CD8-positive, alpha-beta T cell (primary cell): ENCODE measurements at regions of chr4 and their contacts with region 1.

Region 1: DNA sequence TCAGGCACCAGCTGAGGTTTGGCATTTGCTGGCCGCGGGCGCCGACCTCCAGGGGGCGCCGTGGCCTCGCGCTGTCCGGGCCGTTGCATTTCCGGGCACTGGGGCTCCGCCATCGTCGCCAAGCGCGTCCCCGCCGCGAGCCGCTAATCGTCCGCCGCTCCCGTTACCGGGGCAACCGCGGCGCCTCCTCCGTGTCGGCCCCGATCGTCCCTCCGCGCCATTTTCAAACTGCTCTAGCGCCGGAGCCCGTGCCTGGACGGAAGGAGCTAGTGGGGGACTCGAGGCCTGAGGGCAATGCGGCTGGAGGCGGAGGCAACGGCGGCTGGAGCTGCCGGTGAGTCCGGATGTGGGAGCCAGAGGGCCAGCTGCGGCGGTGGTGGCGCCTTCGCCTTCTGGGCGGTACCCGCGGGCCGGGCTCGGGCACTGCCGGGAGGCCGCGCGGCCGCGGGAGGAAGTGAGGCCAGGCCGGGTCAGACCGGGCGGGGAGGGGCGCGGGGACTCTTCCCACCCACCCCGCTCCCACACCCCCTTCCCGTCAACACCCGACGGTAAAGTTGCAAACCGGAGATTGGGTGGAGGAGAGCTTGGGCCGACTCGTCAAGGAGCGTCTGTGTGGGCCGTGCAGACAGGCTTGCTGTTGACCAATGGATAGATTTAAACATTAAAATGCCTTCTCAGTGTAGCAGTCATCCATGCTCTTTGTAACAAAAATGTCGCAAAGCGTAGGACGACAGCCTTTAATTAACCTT is at the start of gene CEP135:
- DNase-seq: peak; percentile 85 to 96 (median 92)
- ATAC-seq: peak; percentile 70
- H3K4me3 ChIP-seq: peak within 1 kb of the TSS; percentile 66 to 86
- H3K4me3 Mint-ChIP-seq: peak within 1 kb of the TSS; percentile 88
- H3K27ac ChIP-seq: peak within 1 kb of the TSS; percentile 72 to 88
- H3K27ac Mint-ChIP-seq: peak within 1 kb of the TSS; percentile 92
- H3K4me1 ChIP-seq: peaks cover 21% of the 10 kb centered on the region
- H3K4me1 Mint-ChIP-seq: peaks cover 46% of the 10 kb centered on the region
- H3K27me3 ChIP-seq: no peaks in the 10 kb centered on the region
- H3K27me3 Mint-ChIP-seq: no peaks in the 10 kb centered on the region
- CTCF ChIP-seq: peak; percentile 78
- total RNA-seq, gene CEP135: 16.6 to 17.1 TPM

Region 2: DNA sequence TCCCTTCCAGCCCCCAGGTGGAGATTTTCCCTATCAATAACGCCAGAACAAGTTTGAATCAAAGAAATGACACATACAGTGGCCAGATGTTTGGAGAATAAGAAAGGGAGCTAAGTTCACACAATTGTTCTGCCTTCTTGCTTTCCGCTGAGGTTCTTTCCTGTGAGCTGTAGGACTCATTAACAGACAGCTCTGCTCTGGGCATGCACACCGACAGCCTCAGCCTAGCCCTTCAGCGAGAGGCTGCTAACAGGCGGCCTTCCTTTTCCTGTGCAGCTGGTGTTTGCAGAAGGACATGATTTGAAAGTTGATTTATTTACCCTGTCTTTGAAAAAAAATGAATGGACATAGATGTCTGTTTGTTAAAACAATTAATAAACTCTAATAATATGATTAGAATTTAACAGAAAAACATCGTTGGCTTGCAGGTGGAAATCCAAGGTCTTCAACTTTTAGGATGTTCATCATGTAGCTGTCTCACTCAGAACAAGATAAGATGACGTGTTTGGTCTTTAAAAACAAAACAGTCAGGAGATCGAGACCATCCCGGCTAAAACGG is 1006.8 kb before region 1 on chr4:
- CTCF ChIA-PET with region 1: no interaction called
- POLR2A ChIA-PET with region 1: no interaction called
- intact Hi-C with region 1: loop called in 1 of 2 experiments (anchors 10 kb)
- DNase-seq: peak; percentile 18 to 78 (median 34)
- ATAC-seq: peak; percentile 79
- H3K4me3 ChIP-seq: peak overlapping the region in 1 of 2 experiments; percentile 12
- H3K4me3 Mint-ChIP-seq: peak overlapping the region; percentile 71
- H3K27ac ChIP-seq: peak overlapping the region; percentile 59 to 72
- H3K27ac Mint-ChIP-seq: peak overlapping the region; percentile 98
- H3K4me1 ChIP-seq: peaks cover 40% of the 10 kb centered on the region
- H3K4me1 Mint-ChIP-seq: peaks cover 56% of the 10 kb centered on the region
- H3K27me3 ChIP-seq: no peaks in the 10 kb centered on the region
- H3K27me3 Mint-ChIP-seq: no peaks in the 10 kb centered on the region
- CTCF ChIP-seq: no peak

Region 3: DNA sequence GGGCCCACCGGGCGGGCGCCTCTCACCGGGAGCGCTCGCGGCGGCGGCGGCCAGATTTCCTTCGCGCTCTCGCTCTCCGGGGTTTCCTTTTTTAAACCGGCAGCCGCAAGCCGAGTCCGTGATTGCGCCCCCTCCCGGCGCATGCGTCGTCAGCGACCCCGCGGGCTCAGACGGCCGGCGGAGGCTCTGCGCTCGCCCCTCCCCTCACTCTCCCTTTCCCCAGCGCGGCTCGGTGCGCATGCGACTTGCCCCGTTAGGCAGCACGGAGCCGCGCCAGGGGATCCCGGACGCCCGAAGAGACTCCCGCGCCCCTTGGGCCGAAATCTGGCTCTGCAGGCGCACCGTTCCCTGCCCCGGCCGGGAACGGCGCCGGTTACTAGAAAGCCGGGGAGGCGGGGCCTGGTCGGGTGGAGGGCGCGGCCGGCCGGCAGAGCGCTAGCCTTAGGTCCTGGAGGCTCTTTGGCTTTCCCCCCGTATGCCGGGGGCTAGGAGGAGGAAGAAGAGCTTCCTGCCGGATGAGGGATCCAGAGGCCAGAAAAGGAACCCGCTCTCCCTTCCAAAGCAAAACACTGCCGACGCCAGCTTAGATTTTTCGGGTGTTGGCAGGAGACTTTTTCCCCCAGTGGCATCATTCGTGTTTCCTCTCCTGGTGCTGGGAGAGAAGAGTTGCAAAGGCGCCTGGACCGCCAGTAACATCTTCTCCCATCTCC is 402.0 kb before region 1 on chr4 and contains the start of gene CLOCK:
- CTCF ChIA-PET with region 1: no interaction called
- POLR2A ChIA-PET with region 1: interaction called, 3 read pairs
- intact Hi-C with region 1: loop called (anchors 1 to 5 kb)
- DNase-seq: peak; percentile 60 to 91 (median 82)
- ATAC-seq: peak; percentile 72
- H3K4me3 ChIP-seq: peak within 1 kb of the TSS; percentile 90 to 91
- H3K4me3 Mint-ChIP-seq: peak within 1 kb of the TSS; percentile 93
- H3K27ac ChIP-seq: peak within 1 kb of the TSS; percentile 71 to 82
- H3K27ac Mint-ChIP-seq: peak within 1 kb of the TSS; percentile 93
- H3K4me1 ChIP-seq: peaks cover 9% of the 10 kb centered on the region
- H3K4me1 Mint-ChIP-seq: peaks cover 40% of the 10 kb centered on the region
- H3K27me3 ChIP-seq: no peaks in the 10 kb centered on the region
- H3K27me3 Mint-ChIP-seq: peaks cover 5% of the 10 kb centered on the region
- CTCF ChIP-seq: peak; percentile 41
- total RNA-seq, gene CLOCK: 3.7 to 4.3 TPM

Region 4: DNA sequence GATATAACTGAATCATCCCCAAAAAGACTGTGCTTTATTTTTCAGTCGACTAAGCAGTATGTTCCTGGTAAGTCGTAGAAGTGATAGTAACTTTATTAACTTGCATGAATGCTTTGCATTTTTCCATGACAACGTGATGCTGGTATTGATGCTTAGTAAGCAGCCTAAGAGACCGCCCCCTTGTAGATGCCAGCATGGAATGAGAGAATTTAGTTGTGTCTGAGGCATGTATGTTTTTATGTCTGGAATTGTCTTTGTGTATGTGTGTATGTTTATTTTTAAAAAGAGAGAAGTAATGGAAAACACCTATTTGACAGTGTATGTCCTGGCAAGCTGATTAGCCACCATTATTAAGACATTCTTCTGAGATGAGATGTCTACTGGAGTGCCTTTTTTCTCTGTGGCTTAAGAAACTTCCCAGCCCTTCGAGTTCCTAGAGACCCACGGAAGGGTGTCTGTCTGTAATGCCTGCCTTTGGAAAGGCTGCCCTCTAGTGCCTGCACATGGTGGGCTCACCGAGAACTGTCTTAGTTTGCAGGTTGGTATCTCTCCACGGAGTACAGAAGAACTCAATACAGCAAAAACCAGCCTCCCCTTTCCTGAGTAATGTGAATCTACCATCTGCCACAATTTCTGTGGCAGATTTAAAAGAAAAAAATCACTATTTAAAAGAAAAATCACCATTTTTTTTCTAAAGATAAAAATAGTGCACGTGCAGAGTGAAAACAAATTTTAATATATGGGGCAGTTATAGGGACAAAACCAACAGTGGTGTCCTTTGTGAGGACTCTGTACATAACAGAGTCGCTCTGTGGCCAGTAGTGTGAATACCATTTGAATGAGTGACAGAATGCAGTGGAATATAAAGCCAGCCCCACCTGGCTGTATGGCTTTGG is 352.5 kb after region 1 on chr4:
- CTCF ChIA-PET with region 1: interaction called, 8 read pairs
- POLR2A ChIA-PET with region 1: no interaction called
- intact Hi-C with region 1: loop called in 1 of 2 experiments (anchors 2 kb)
- DNase-seq: peak; percentile 5 to 68 (median 51)
- ATAC-seq: peak; percentile 89
- H3K4me3 ChIP-seq: no peak overlapping the region
- H3K4me3 Mint-ChIP-seq: no peak overlapping the region
- H3K27ac ChIP-seq: no peak overlapping the region
- H3K27ac Mint-ChIP-seq: no peak overlapping the region
- H3K4me1 ChIP-seq: peaks cover 4% of the 10 kb centered on the region
- H3K4me1 Mint-ChIP-seq: peaks cover 9% of the 10 kb centered on the region
- H3K27me3 ChIP-seq: no peaks in the 10 kb centered on the region
- H3K27me3 Mint-ChIP-seq: no peaks in the 10 kb centered on the region
- CTCF ChIP-seq: peak; percentile 86

Region 5: DNA sequence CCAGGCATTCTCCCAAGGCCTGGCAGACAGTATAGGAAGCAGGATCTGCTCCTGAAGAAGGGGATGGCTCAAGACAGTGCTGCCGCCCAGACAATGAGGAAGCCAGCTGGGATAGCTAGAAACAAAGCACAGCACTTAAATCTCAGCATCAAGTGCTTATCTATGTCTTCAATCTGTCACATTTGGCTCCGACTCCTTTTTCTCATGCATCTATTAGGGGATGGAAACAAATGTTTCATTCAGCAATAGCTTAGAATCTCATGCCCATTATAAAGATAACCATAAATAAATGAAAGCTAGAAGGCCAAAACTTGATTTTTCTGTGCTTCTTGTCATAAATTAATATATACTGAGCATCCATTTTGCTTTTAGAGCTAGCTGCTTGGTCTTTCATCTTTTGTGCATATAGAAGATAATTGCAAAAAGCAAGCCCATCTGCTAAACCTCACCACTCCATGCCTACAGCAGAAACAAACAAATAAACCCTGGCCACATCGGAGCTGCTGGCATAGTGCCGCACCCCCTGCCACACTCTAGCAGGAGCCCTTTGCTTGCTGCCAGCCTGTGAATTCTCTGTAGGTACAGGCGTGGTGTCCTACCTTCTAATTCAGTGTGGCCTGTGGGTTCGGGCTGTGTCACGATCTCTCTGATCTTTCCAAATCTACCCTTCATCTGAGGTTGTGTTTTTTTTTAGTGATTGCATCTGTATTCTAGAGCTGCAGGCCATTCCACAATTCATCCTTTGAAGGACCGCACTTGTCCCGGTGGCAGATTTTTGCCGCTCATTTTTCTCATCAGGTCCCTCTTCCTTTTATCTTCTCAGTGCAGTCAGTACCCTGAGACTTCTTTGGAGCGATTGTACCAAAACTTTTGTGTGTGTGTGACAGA is 362.6 kb after region 1 on chr4:
- CTCF ChIA-PET with region 1: no interaction called
- POLR2A ChIA-PET with region 1: no interaction called
- intact Hi-C with region 1: no loop called
- DNase-seq: no peak
- ATAC-seq: no peak
- H3K4me3 ChIP-seq: no peak overlapping the region
- H3K4me3 Mint-ChIP-seq: no peak overlapping the region
- H3K27ac ChIP-seq: no peak overlapping the region
- H3K27ac Mint-ChIP-seq: no peak overlapping the region
- H3K4me1 ChIP-seq: no peaks in the 10 kb centered on the region
- H3K4me1 Mint-ChIP-seq: no peaks in the 10 kb centered on the region
- H3K27me3 ChIP-seq: no peaks in the 10 kb centered on the region
- H3K27me3 Mint-ChIP-seq: no peaks in the 10 kb centered on the region
- CTCF ChIP-seq: no peak

Region 6: DNA sequence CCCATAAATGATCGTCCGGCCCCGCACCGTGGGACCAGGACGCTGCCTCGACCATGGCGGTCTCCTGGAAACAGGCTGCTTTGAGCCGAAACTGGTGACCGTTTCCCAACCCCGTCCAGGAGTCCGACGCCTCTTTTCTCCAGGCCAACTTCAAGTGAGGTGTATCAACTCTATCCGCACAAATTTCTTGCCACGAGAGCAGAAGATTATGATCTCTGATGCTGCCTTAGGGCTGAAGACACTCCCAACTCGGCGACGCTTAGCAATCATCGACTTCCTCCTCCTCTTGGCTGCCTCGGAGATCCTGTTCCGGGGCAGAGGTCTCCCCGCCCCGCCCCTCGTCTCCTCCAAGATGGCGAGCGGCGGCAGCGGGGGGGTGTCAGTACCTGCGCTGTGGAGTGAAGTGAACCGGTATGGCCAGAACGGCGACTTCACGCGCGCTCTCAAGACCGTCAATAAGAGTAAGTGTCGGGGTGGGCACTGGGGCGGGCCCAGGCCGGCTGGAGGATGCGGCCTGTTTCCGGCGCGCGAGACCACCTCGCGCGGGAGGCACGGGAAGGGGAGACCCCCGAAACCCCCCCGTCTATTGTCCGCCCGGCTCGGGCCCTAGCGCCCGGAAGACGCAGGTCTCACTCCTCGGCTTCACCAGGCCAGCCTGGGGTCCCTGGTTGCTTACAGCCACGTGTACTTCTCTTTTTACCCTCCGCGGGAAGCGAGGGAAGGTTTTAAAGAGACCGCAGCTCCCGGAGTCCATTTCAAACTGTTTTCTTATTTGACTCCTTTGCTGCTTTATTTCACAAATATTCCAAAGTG is 518.6 kb after region 1 on chr4 and contains the start of gene SRP72:
- CTCF ChIA-PET with region 1: no interaction called
- POLR2A ChIA-PET with region 1: no interaction called
- intact Hi-C with region 1: loop called in 1 of 2 experiments (anchors 10 kb)
- DNase-seq: peak; percentile 81 to 95 (median 90)
- ATAC-seq: peak; percentile 96
- H3K4me3 ChIP-seq: peak within 1 kb of the TSS; percentile 63 to 98
- H3K4me3 Mint-ChIP-seq: peak within 1 kb of the TSS; percentile 100
- H3K27ac ChIP-seq: peak within 1 kb of the TSS; percentile 69 to 92
- H3K27ac Mint-ChIP-seq: peak within 1 kb of the TSS; percentile 100
- H3K4me1 ChIP-seq: peaks cover 44% of the 10 kb centered on the region
- H3K4me1 Mint-ChIP-seq: peaks cover 60% of the 10 kb centered on the region
- H3K27me3 ChIP-seq: no peaks in the 10 kb centered on the region
- H3K27me3 Mint-ChIP-seq: no peaks in the 10 kb centered on the region
- CTCF ChIP-seq: no peak
- total RNA-seq, gene SRP72: 142 to 148 TPM

Region 7: GRCh38 chr4:56907489-56908205 is 958.7 kb after region 1 on chr4 and contains the start of gene REST:
- CTCF ChIA-PET with region 1: no interaction called
- POLR2A ChIA-PET with region 1: interaction called, 3 read pairs
- intact Hi-C with region 1: loop called (anchors 1 to 5 kb)
- DNase-seq: peak; percentile 74 to 91 (median 84)
- ATAC-seq: peak; percentile 67
- H3K4me3 ChIP-seq: peak within 1 kb of the TSS; percentile 64 to 92
- H3K4me3 Mint-ChIP-seq: peak within 1 kb of the TSS; percentile 97
- H3K27ac ChIP-seq: peak within 1 kb of the TSS; percentile 57 to 86
- H3K27ac Mint-ChIP-seq: peak within 1 kb of the TSS; percentile 95
- H3K4me1 ChIP-seq: peaks cover 43% of the 10 kb centered on the region
- H3K4me1 Mint-ChIP-seq: peaks cover 42% of the 10 kb centered on the region
- H3K27me3 ChIP-seq: no peaks in the 10 kb centered on the region
- H3K27me3 Mint-ChIP-seq: no peaks in the 10 kb centered on the region
- CTCF ChIP-seq: no peak
- total RNA-seq, gene REST: 58.9 to 60.7 TPM